GM13976 (cell line): ENCODE measurements at regions of chr11 and their contacts with region 1.

Region 1: GRCh38 chr11:27705873-27706820 is 5.9 kb upstream of the BDNF start:
- DNase-seq: peak; percentile 41
- CTCF ChIP-seq: peak; percentile 51

Region 2: GRCh38 chr11:27945348-27945747 is 239.2 kb after region 1 on chr11:
- in situ Hi-C with region 1: no loop called
- DNase-seq: no peak
- CTCF ChIP-seq: no peak

Region 3: DNA sequence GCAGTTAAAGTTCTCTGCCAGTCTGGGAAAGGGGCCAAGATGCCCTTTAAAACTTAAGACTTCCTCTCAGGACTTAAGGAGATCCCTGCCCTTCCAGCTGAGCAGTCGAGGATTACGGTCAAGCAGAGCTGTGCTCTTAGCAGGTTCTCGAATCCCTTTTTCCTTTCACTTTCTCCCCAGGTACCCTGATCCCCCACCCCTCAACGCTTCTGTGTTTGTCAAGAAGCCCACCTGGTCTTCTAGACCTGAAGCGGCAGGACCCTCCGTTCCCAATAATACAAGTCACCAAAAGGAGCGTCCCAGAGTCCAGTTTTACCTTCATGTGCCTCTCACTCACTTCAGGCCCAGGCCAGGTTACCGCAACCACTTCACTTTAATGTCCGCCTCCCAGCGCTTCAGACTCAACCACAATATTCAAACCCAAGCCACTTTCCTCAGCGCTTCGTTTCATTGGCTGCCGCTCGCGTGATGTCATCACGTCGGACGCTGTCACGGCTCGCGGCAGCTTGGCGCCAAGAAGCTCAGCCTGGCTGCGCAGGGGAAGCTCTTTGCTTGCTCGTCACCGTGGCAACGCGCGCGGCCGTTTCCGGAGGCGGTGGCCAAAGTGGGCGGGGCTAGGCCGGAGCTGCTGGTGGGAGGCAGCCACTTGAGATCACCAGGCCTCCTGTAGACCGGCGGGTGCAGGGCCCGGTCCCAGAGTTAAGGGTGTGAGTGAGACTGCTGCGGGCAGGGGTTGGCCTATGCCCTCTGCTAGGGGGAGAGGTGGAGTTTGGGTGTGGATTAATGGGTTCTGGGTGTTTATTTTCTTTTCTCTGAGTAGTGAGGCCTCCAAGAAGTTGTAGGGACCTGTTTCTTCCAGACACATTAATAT is 401.8 kb after region 1 on chr11 and contains the starts of genes KIF18A and METTL15:
- in situ Hi-C with region 1: loop called (anchors 25 kb)
- DNase-seq: peak; percentile 90
- CTCF ChIP-seq: no peak

Region 4: DNA sequence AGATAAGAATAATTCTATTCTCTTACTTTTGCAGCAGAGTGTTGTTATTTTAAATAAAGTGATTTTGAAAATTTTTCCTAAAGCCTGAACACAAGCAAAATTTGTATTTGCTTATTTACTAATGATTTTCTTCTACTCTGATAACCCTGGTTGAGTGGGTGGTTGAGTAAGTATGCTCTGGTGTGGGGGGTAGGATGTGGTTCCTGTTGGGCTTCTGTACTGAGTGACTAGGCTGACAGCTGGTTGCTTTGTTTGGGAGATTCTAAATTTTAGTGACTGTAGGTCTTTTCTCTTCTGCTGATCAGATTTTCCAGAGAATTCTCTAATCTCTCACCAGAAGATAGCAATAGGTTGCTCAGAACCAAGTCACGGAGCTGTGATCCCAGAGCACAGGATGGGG is 463.7 kb after region 1 on chr11:
- in situ Hi-C with region 1: no loop called
- DNase-seq: no peak
- CTCF ChIP-seq: no peak

Region 5: DNA sequence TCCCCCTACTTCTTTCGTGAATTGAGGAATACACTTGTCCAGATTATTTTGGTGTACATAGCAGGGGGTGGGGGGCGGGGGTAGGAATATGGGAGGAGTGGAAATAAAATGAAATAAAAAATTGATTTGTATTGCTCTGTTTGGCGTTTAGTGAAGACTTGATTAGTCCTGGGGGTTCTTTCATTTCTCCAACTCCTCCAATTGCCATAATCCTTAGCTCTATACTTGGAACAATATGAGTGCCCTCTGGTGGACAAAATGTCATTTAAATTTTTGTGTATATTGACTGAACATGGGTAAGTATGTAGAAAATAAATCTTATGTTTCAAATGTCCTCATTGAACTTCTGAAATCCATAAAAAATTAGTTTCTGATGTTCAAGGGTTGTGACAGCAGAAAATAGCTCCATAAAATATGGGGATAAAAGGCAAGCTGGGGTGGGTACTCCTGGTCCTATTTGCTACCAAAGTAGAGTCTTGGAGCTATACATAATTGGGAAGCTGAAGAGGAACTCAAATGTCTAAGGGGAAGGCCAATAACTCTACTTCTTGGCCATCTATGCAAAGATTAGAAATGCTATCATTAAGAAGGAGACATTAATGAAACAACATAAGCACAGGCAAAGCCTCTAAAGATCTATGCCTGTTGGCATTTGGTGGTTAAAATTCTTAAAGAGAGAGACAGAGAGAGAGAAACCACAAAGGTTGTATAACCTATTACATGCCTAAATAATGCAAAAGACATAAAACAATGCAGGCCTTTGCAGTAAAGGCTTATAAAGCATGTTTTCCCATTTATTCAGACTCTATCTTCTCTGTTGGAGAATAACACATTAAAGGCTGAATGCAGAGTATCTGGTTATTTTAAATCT is 823.6 kb after region 1 on chr11:
- in situ Hi-C with region 1: loop called (anchors 25 kb)
- DNase-seq: peak; percentile 27
- CTCF ChIP-seq: no peak

Region 6: DNA sequence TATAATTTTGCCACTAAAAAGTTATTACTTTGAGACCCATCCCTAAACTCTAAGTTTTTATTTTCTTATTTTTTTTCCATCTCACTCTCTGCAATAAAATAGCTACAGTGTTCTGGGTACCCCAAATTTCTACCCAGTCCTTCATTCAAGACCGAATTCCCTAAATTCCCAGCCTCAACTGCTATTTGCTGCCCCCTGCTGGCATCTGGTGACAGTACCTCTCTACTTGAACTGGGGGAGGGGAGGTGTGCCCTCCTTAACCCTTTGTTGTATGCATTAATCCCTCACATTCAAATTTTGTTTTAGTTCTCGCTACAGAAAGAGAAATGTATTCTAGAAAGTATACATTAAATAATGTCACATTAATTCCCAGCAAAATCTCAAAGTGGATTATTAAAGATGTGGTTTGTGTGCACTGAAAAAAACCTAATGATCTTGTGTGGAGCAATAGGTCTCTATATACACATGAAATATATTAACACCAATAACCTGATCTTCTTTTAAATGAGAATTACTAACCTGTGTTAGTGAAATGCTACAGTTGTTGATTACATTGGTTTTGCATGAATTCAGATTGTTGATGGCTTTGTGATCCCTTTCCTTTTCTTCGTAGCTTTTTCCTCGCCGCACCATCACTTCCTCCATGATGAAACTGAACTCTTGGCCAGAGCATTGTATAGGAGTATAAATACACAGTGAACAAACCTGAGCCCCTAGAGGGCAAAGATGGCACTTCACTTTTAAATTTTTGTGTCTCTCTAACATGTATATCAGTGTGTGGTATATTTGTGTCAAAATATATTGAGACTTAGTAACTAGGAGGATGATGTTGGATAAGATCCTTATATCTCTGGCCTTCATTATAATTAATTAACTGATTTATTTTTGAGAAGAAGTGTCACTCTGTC is 992.0 kb after region 1 on chr11:
- in situ Hi-C with region 1: loop called (anchors 10 kb)
- DNase-seq: peak; percentile 17
- CTCF ChIP-seq: peak; percentile 81